ENCODE measurements at regions of chr3 and their contacts with region 1.

Region 1: GRCh38 chr3:158570999-158571974 is at the start of gene MLF1:
- DNase-seq: peak; percentile 86 to 98
- H3K4me3 ChIP-seq: peak within 1 kb of the TSS; percentile 38 to 66 (median 60)
- H3K27ac ChIP-seq: no peak within 1 kb of the TSS
- H3K4me1 ChIP-seq: peaks cover 0 to 15% (median 3%) of the 10 kb centered on the region in 4 experiments; a peak in 2 of 7 replicates
- H3K27me3 ChIP-seq: peaks cover 0 to 13% (median 10%) of the 10 kb centered on the region in 4 experiments; a peak in 5 of 7 replicates
- CTCF ChIP-seq: no peak
- EP300 ChIP-seq: peak; percentile 46 to 78; a peak in 2 of 3 replicates
- POLR2A ChIP-seq: peak; percentile 78 to 86
- RAD21 ChIP-seq: no peak
- total RNA-seq, gene MLF1: 39.1 and 48.9 TPM in 2 replicates

Region 2: GRCh38 chr3:158560979-158561378 is 10.3 kb before region 1 on chr3:
- CTCF ChIA-PET with region 1: interaction called, 11 read pairs
- POLR2A ChIA-PET with region 1: interaction called, 3 read pairs
- DNase-seq: no peak
- H3K4me3 ChIP-seq: no peak overlapping the region
- H3K27ac ChIP-seq: no peak overlapping the region
- H3K4me1 ChIP-seq: no peaks in the 10 kb centered on the region
- H3K27me3 ChIP-seq: no peaks in the 10 kb centered on the region
- CTCF ChIP-seq: no peak
- EP300 ChIP-seq: no peak
- POLR2A ChIP-seq: no peak
- RAD21 ChIP-seq: no peak

Region 3: GRCh38 chr3:158602227-158602626 is 30.9 kb after region 1 on chr3:
- CTCF ChIA-PET with region 1: no interaction called
- POLR2A ChIA-PET with region 1: no interaction called
- DNase-seq: no peak
- H3K4me3 ChIP-seq: no peak overlapping the region
- H3K27ac ChIP-seq: no peak overlapping the region
- H3K4me1 ChIP-seq: no peaks in the 10 kb centered on the region
- H3K27me3 ChIP-seq: no peaks in the 10 kb centered on the region
- CTCF ChIP-seq: no peak
- EP300 ChIP-seq: no peak
- POLR2A ChIP-seq: no peak
- RAD21 ChIP-seq: no peak

Region 4: DNA sequence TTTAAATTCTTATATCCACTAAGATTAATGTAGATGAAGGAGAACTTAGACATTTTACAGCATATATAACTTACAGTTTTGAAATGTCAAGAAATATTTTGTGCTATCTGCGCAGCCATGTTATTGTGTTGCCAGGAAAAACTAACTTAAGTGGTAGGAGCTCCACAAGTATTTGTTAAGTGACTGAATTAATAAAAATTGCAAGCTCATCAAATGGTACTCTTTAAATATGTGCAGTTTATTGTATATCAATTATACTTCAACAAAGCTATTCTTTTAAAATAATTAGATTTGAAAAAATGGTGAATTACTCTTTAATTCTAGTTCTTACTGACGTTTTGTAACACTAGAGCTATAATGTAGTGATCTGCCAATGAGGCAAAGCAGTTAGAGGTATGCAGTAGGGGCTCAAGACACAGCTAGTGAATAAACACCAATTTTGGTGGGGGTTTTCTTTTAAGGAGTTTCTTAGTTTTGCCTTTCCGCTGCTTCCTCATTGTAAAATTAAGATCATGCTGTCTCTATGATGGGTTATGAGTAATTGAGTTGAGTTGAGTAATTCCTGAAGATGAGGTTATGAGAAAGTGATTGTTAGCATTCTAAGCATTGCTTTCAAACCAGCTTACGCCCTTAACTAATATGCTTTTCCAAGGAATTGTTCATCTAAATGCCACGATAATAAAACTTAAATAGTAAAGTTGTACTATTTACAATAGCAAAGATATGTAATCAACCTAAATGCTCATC is 112.1 kb after region 1 on chr3:
- CTCF ChIA-PET with region 1: no interaction called
- POLR2A ChIA-PET with region 1: no interaction called
- DNase-seq: no peak
- H3K4me3 ChIP-seq: no peak overlapping the region
- H3K27ac ChIP-seq: no peak overlapping the region
- H3K4me1 ChIP-seq: no peaks in the 10 kb centered on the region
- H3K27me3 ChIP-seq: no peaks in the 10 kb centered on the region
- CTCF ChIP-seq: no peak
- EP300 ChIP-seq: no peak
- POLR2A ChIP-seq: no peak
- RAD21 ChIP-seq: no peak

Measured in H1 (cell line).